PC-3 (cell line): ENCODE measurements at regions of chr4 and their contacts with region 1.

Region 1: GRCh38 chr4:11720292-11720691 is 291.6 kb upstream of the HS3ST1 start:
- DNase-seq: peak; percentile 67
- ATAC-seq: peak; percentile 55
- H3K4me3 ChIP-seq: no peak overlapping the region
- H3K27ac ChIP-seq: peak overlapping the region; percentile 61
- H3K4me1 ChIP-seq: peaks cover 14% of the 10 kb centered on the region
- H3K27me3 ChIP-seq: no peaks in the 10 kb centered on the region
- CTCF ChIP-seq: peak; percentile 74

Region 2: DNA sequence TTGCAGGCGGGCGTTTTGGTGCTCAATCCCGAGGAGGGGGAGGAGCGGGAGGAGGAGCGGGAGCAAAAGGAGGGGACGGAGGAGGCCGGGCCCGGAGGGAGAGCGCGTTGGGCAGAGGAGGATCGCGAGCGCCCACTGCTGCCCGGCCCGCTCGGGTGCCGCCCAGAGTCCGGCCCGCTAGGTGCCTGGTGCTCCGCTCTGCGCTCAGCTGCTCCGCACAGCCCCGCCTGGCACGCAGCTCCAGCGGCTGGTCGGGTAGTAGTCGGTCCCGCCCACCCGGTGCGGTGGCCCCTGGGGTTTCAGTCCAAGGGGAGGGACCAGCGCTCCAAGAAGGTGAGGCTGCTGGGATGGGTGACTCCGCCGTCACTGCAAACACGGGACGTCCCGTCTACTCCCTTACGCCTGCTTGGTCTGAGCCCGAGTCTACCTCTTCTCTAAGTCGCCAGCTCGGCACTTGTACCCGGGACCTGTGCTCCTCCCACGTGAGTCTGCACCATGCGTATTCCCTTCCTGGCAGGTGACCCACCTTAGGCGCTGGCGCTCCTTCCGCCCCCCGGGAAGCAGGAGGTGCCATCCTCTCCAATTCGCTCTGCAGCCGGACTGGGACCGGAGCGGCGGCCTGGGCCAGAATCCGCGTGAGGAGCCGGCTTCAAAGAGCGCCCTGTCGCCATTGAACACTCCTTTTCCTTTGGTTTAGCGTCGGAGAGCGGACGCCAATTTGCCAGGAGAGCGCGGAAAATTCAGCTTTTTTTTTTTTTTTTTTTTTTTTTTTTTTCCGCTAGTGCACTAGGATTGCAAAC is 291.2 kb before region 1 on chr4:
- CTCF ChIA-PET with region 1: no interaction called
- POLR2A ChIA-PET with region 1: no interaction called
- intact Hi-C with region 1: loop called (anchors 2 kb)
- DNase-seq: peak; percentile 86
- ATAC-seq: peak; percentile 90
- H3K4me3 ChIP-seq: peak overlapping the region; percentile 90
- H3K27ac ChIP-seq: peak overlapping the region; percentile 91
- H3K4me1 ChIP-seq: peaks cover 10% of the 10 kb centered on the region; the same call in 1 of the 2 replicates
- H3K27me3 ChIP-seq: no peaks in the 10 kb centered on the region
- CTCF ChIP-seq: peak; percentile 64

Region 3: GRCh38 chr4:11543706-11544105 is 176.6 kb before region 1 on chr4:
- CTCF ChIA-PET with region 1: no interaction called
- POLR2A ChIA-PET with region 1: no interaction called
- intact Hi-C with region 1: loop called (anchors 5 kb)
- DNase-seq: peak; percentile 73
- ATAC-seq: peak; percentile 52
- H3K4me3 ChIP-seq: peak overlapping the region; percentile 25; the same call in 1 of the 2 replicates
- H3K27ac ChIP-seq: peak overlapping the region; percentile 99
- H3K4me1 ChIP-seq: peaks cover 38% of the 10 kb centered on the region
- H3K27me3 ChIP-seq: no peaks in the 10 kb centered on the region
- CTCF ChIP-seq: no peak

Region 4: DNA sequence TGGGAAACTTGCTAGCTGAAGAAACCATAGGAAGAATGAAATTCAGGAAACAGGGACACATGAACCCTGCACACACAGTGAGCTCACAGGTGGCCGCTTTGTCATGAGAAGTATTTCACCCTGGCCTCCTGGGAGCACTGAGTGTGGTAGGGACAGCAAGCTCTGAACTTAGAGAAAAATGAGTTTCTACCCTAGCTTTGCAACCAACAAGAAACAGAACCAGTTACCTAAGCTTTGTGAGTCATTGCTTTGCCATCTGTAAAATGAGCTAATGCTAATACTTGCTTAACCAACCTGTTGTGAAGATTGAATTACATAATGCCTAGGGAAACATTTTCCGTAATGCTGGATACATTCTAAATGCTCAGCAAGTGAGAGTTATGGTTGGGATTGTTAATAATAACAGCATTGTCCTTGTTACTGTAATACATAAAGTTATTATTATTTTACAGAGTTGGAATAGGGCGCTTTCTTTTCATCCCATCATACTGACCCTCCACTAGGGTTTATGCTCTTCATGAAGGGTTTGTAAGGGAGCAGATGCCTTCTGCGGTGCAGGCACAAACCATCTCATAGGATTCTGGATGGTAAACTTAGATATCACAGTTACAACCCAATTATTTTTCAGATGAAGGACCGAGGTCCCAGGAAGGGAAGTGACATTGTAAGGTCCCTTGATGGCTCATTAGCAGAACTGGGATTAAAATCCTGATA is 84.8 kb before region 1 on chr4:
- CTCF ChIA-PET with region 1: interaction called, 3 read pairs
- POLR2A ChIA-PET with region 1: interaction called, 5 read pairs
- intact Hi-C with region 1: loop called (anchors 1 kb)
- DNase-seq: peak; percentile 89
- ATAC-seq: peak; percentile 65
- H3K4me3 ChIP-seq: no peak overlapping the region
- H3K27ac ChIP-seq: peak overlapping the region; percentile 98
- H3K4me1 ChIP-seq: peaks cover 62% of the 10 kb centered on the region
- H3K27me3 ChIP-seq: no peaks in the 10 kb centered on the region
- CTCF ChIP-seq: no peak

Region 5: GRCh38 chr4:11698846-11699590 is 21.3 kb before region 1 on chr4:
- CTCF ChIA-PET with region 1: no interaction called
- POLR2A ChIA-PET with region 1: no interaction called
- intact Hi-C with region 1: loop called (anchors 2 kb)
- DNase-seq: peak; percentile 92
- ATAC-seq: peak; percentile 90
- H3K4me3 ChIP-seq: peak overlapping the region; percentile 20; the same call in 1 of the 2 replicates
- H3K27ac ChIP-seq: peak overlapping the region; percentile 95
- H3K4me1 ChIP-seq: peaks cover 58% of the 10 kb centered on the region
- H3K27me3 ChIP-seq: no peaks in the 10 kb centered on the region
- CTCF ChIP-seq: no peak